ENCODE measurements at regions of chr22 and their contacts with region 1.

Region 1: DNA sequence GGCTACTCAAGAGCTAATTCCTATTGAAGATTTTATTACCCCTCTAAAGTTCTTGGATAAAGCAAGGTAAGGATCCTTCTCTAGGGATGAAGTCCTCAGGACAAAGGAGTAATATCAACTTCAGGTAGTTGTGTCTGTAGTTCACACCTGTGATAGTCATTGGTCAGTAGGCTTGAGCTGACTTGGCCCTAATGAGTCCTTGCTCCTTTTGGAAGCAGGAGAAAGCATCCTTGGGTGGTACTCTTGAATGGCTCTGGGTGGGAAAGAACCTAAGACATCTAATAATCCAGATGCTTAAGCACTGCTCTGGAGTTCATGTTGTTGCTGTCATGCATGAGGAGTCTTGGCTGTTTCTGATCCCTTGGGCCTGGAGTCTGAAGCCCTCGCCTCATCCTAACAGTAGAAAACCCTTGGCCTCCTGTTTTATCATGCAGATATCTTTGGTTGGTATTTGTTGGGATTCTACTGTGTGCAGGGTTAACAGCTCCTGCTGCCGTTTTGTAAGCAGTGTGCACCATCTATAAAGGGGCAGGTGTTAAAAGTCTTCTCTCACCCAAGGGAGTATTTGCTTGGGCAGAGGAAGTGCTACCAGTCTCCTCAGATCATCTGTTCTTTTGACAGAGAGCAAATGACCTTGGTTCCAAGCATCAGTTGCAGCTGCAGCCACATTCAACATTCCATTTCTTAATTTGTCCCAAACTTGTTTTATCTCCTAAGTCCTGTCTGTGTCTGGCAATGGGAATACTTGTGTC is 2.7 kb downstream of the MRPL40 start:
- DNase-seq: no peak
- CTCF ChIP-seq: no peak

Region 2: GRCh38 chr22:19447388-19448075 is 12.5 kb after region 1 on chr22 and contains the start of gene C22orf39:
- CTCF ChIA-PET with region 1: interaction called, 10 read pairs
- POLR2A ChIA-PET with region 1: interaction called, 5 read pairs
- DNase-seq: peak; percentile 97
- CTCF ChIP-seq: no peak

Region 3: DNA sequence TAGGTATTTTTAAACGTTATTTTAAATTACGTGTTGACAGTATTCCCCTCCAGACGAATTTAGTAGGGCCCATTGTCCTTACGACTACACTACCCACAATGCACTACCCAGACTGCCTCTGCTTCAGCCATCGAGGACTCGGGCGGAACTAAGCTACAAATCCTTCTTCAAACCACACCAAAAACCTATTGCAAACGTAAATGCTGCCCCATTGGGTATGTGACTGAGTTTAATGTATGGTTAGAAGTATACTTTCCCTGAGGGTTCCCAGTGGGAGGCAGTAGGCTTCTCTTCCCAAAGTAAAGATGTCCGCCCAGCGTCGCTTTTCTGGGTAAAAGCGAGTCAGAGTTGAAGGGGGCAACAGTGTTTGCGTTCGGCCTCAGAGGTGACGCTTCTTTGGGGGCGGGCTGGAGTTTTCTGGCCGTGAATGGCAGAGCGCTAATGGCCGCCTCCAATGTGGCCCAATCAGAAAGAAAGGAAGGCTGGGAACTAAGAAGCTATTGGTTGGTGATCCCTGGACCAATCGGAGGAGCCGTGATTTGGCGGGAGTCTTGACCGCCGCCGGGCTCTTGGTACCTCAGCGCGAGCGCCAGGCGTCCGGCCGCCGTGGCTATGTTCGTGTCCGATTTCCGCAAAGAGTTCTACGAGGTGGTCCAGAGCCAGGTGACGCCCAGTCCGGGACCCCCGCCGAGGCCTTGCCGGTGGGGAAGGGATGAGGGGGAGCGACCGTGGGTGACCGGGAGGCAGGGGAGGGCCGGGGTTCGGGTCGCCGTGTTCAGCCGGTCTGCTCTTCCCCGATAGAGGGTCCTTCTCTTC is 44.6 kb after region 1 on chr22 and contains the start of gene CDC45:
- CTCF ChIA-PET with region 1: no interaction called
- POLR2A ChIA-PET with region 1: no interaction called
- DNase-seq: peak; percentile 98
- CTCF ChIP-seq: no peak

Region 4: DNA sequence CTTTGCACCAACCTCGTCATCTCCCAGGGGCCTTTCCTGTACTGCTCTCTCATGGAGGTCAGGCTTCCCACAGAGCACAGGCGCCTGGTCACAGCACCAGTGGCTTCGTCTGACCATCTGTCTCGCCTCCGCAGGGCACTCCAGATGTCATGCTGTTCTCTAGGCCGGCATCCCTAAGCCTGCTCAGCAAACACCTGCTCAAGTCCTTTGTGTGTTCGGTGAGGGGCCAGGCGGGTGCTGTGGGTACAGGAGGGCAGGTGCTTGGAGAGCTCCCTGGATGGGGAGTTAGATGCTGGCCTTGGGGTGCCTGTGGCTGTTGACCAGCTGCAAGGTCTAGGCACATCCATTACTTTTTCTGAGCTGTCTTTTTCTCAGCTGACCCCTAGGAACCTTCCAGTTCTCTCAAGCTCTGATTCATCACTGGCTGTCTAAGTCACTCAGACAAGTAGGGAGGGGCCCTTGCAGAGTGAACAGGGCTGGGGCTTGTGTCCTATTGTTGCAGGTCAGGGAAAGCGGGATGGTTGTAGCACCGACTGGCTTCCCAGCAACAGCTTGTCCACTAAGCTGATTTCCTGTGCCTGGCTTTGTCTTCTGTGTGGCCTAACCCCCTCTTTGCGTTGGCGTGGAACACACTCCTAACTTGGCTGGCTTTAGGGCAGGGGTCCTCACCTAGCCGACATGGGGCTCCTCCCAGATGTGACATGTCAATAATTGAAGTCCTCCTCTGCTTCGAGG is 80.0 kb after region 1 on chr22:
- CTCF ChIA-PET with region 1: no interaction called
- POLR2A ChIA-PET with region 1: no interaction called
- DNase-seq: no peak
- CTCF ChIP-seq: no peak

Measured in GM10248 (cell line).